MCF 10A (cell line): ENCODE measurements at regions of chr5 and their contacts with region 1.

Region 1: DNA sequence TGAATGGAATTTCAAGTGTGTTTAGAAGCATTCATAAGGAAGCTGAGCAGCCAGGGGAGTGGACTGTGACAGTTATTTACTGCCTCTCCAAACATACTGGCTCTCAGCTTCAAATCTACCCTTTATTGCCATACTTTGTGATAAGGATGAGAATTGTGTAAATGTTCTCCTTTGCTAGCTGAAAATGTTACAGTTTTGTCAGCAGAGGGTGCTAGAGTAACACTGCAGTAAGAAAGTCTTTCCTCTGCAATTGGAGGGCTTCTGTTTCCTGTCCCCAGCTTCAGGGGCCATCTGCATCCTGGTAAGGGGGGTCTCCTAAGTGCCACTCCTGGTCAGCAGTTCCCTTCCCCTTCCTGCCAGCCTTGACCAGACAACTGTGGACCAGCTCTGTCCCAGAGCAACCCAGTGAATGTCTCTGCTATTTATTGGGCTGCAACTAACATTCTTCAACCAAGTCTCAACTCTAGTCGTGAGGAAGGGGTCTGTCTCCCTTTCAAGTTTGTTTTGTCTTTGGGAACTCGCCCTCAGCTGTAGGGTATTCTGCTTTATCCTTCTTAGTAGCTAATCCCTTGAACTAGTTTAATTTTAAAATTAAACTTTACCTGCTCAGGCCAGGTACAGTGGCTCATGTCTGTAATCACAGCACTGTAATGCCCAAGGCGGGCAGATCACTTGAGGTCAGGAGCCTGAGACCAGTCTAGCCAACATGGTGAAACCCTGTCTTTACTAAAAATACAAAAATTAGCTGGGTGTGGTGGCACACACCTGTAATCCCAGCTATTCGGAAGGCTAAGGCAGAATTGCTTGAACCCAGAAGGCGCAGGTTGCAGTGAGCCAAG is 45.3 kb downstream of the RAPGEF6 start:
- DNase-seq: peak; percentile 58
- H3K4me3 Mint-ChIP-seq: no peak overlapping the region
- H3K27ac Mint-ChIP-seq: no peak overlapping the region
- H3K4me1 Mint-ChIP-seq: peaks cover 8% of the 10 kb centered on the region
- H3K27me3 Mint-ChIP-seq: no peaks in the 10 kb centered on the region
- CTCF ChIP-seq: peak; percentile 98

Region 2: GRCh38 chr5:131575660-131576227 is 14.0 kb before region 1 on chr5:
- CTCF ChIA-PET with region 1: interaction called, 39 read pairs
- POLR2A ChIA-PET with region 1: interaction called, 4 read pairs
- intact Hi-C with region 1: no loop called
- DNase-seq: no peak
- H3K4me3 Mint-ChIP-seq: no peak overlapping the region
- H3K27ac Mint-ChIP-seq: no peak overlapping the region
- H3K4me1 Mint-ChIP-seq: no peaks in the 10 kb centered on the region
- H3K27me3 Mint-ChIP-seq: no peaks in the 10 kb centered on the region
- CTCF ChIP-seq: no peak

Region 3: GRCh38 chr5:131615957-131616356 is 26.2 kb after region 1 on chr5:
- CTCF ChIA-PET with region 1: interaction called, 55 read pairs
- POLR2A ChIA-PET with region 1: interaction called, 3 read pairs
- intact Hi-C with region 1: no loop called
- DNase-seq: no peak
- H3K4me3 Mint-ChIP-seq: no peak overlapping the region
- H3K27ac Mint-ChIP-seq: no peak overlapping the region
- H3K4me1 Mint-ChIP-seq: peaks cover 9% of the 10 kb centered on the region
- H3K27me3 Mint-ChIP-seq: no peaks in the 10 kb centered on the region
- CTCF ChIP-seq: no peak

Region 4: GRCh38 chr5:131640043-131640856 is 50.5 kb after region 1 on chr5:
- CTCF ChIA-PET with region 1: interaction called, 11 read pairs
- POLR2A ChIA-PET with region 1: interaction called, 7 read pairs
- intact Hi-C with region 1: no loop called
- DNase-seq: peak; percentile 32
- H3K4me3 Mint-ChIP-seq: no peak overlapping the region
- H3K27ac Mint-ChIP-seq: no peak overlapping the region
- H3K4me1 Mint-ChIP-seq: peaks cover 6% of the 10 kb centered on the region
- H3K27me3 Mint-ChIP-seq: no peaks in the 10 kb centered on the region
- CTCF ChIP-seq: no peak

Region 5: DNA sequence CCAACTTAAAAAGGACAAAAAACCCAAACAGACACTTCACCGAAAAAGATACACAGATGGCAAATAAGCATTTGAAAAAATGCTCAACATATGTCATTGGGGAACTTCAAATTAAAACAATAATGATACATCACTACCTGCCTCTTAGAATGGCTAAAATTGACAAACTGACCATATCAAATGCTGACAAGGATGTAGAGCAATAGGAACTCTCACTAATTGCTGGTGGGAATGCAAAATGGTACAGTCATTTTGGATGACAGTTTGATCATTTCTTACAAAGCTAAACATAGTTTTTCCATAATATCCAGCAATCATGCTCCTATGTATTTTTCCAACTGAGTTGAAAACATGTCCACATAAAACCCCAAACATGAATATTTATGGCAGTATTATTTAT is 104.2 kb after region 1 on chr5:
- CTCF ChIA-PET with region 1: interaction called, 7 read pairs
- POLR2A ChIA-PET with region 1: no interaction called
- intact Hi-C with region 1: loop called (anchors 10 kb)
- DNase-seq: no peak
- H3K4me3 Mint-ChIP-seq: no peak overlapping the region
- H3K27ac Mint-ChIP-seq: no peak overlapping the region
- H3K4me1 Mint-ChIP-seq: no peaks in the 10 kb centered on the region
- H3K27me3 Mint-ChIP-seq: no peaks in the 10 kb centered on the region
- CTCF ChIP-seq: no peak

Region 6: DNA sequence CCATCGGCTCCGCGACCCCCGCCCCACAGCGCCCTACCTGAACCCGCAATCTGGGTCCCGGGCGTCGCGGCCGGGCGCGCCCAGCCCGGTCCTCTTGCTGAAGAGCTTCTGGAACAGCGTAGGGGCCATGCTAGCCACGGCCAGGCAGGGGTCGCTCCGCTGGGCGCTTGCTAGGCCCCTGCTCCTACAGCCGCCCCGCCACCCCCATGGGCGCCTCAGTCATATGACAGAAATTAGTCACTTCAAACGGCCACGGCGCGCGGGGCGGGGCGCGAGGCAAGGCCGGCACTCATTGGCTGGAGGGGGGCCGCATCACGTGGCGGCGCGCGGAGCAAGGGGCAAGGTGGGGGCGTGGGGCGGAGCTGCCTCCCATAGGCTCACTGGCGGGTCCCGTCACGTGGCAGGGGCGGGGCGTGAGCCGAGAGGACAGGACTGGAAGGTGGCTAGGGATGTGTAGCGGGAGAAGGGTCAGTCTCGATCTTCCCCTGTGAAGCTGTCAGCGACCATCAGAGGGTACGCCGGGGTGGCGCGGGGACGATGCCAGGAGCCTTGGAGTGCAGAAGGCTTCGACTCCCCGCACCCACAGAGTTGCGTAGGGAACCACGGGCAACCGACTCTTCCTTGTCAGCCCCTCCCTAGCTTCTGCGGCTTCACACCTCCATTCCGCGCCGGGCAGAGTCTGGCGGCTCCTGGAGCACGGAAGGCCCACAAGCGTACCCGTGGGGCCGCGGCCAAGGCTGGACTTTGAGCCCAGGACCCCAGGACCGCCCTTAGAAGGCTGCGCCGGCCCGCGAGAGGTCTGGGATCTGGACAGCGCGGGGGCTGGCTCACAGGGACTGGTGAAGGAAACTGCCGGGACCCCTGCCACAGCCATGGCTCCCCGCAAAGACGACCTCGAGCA is 207.3 kb after region 1 on chr5 and contains the start of gene FNIP1:
- CTCF ChIA-PET with region 1: interaction called, 15 read pairs
- POLR2A ChIA-PET with region 1: no interaction called
- intact Hi-C with region 1: loop called (anchors 1 kb)
- DNase-seq: peak; percentile 99
- H3K4me3 Mint-ChIP-seq: peak within 1 kb of the TSS; percentile 94
- H3K27ac Mint-ChIP-seq: peak within 1 kb of the TSS; percentile 94
- H3K4me1 Mint-ChIP-seq: peaks cover 14% of the 10 kb centered on the region
- H3K27me3 Mint-ChIP-seq: no peaks in the 10 kb centered on the region
- CTCF ChIP-seq: no peak
- total RNA-seq, gene FNIP1: 36.3 and 56.6 TPM in 2 replicates

Region 7: DNA sequence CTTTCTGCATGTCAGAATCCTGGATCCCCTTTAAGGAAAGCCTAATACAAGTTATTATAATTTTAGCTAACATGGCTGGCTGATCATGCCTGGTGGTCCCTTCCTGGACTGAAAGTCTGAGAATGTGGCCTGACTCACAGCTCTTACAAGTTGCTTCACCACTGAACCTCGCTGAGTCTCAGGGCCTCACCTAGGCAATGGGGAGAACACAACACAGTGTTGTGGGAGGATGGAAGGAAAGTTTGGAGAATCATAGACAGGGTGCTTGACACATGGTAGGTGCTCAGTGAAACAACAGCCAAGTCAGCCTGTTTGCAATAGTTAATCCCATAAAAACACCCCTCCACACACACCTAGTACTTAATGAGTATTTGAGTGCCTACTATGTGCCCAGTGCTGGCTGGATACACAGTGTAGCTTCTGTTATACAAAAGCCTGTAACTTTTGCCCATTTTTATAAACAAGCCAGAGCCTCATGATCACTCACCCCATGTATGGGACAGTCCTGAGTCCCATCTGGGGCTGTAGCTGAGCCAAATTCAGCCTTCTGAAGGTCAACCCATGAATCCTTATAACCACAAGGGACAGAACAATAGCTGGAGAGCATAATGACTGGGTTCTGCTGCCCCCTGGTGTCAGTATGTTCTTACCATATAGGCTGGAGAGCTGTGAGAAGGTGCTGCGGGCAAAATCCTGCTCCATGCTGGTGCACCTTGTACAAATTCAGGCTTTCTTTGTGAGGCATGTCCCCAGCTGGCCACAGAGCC is 417.9 kb after region 1 on chr5:
- CTCF ChIA-PET with region 1: interaction called, 171 read pairs
- POLR2A ChIA-PET with region 1: interaction called, 5 read pairs
- intact Hi-C with region 1: loop called (anchors 1 kb)
- DNase-seq: peak; percentile 90
- H3K4me3 Mint-ChIP-seq: no peak overlapping the region
- H3K27ac Mint-ChIP-seq: no peak overlapping the region
- H3K4me1 Mint-ChIP-seq: peaks cover 19% of the 10 kb centered on the region
- H3K27me3 Mint-ChIP-seq: no peaks in the 10 kb centered on the region
- CTCF ChIP-seq: peak; percentile 95